Activated naive CD4-positive, alpha-beta T cell treated with anti-CD3 and anti-CD28 coated beads for 36 hours (primary cell): ENCODE measurements at regions of chr15 and their contacts with region 1.

Region 1: DNA sequence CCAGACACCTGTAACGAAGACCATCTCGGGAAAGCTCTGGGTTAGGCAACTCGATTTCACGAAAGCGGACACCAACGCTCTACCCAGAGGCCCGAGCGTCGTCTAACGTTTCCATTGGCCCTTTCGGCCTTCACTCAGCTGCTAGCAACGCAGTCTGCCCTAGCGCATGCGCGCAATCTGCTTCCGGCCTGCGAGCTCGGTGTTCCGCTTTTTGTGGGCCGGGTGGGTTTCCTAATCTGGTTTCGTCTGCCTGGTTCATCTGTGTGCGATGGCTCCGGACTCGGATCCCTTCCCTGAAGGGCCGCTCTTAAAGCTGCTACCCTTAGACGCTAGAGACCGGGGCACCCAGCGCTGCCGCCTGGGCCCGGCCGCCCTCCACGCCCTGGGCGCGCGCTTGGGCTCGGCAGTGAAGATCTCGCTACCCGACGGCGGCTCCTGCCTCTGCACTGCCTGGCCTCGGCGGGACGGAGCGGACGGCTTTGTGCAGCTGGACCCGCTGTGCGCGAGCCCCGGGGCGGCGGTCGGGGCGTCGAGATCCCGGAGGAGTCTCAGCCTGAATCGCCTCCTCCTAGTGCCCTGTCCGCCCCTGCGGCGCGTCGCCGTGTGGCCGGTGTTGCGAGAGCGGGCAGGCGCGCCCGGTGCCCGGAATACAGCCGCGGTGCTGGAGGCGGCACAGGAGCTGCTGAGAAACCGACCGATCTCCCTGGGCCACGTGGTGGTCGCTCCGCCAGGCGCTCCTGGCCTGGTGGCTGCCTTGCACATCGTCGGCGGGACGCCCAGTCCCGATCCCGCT is 24.0 kb upstream of the GATM start:
- DNase-seq: peak; percentile 98
- H3K4me3 Mint-ChIP-seq: peak overlapping the region; percentile 99
- H3K27ac Mint-ChIP-seq: peak overlapping the region; percentile 89
- H3K4me1 Mint-ChIP-seq: peaks cover 27% of the 10 kb centered on the region
- H3K27me3 Mint-ChIP-seq: no peaks in the 10 kb centered on the region

Region 2: GRCh38 chr15:45166834-45167630 is 235.3 kb before region 1 on chr15:
- CTCF ChIA-PET with region 1: interaction called, 41 read pairs
- intact Hi-C with region 1: loop called (anchors 1 kb)
- DNase-seq: peak; percentile 89
- H3K4me3 Mint-ChIP-seq: peak overlapping the region; percentile 69
- H3K27ac Mint-ChIP-seq: peak overlapping the region; percentile 66
- H3K4me1 Mint-ChIP-seq: peaks cover 10% of the 10 kb centered on the region
- H3K27me3 Mint-ChIP-seq: no peaks in the 10 kb centered on the region

Region 3: GRCh38 chr15:45279024-45279698 is 123.2 kb before region 1 on chr15:
- CTCF ChIA-PET with region 1: interaction called, 3 read pairs
- intact Hi-C with region 1: loop called (anchors 1 kb)
- DNase-seq: peak; percentile 96
- H3K4me3 Mint-ChIP-seq: peak overlapping the region; percentile 81
- H3K27ac Mint-ChIP-seq: peak overlapping the region; percentile 52
- H3K4me1 Mint-ChIP-seq: peaks cover 17% of the 10 kb centered on the region
- H3K27me3 Mint-ChIP-seq: no peaks in the 10 kb centered on the region

Region 4: DNA sequence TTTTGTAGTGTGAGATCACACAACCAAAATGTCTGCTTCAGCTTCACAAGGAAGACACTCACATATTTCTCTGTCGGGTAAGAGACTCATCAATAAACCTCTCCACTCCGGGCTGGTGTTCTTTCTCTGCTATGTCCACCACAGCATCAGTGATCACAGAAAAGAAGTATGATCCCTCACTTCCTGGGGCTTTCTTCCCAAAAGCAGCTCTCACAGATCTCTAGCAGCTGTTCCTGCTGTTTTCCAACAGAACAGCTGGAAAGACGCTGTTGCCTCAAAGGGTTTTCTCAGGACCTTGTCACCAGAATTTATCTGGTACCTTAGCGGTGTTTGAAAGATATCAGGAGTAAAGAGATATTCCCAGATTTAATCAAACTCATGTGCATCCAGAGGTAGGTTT is 70.4 kb before region 1 on chr15:
- CTCF ChIA-PET with region 1: no interaction called
- intact Hi-C with region 1: no loop called
- DNase-seq: no peak
- H3K4me3 Mint-ChIP-seq: no peak overlapping the region
- H3K27ac Mint-ChIP-seq: no peak overlapping the region
- H3K4me1 Mint-ChIP-seq: no peaks in the 10 kb centered on the region
- H3K27me3 Mint-ChIP-seq: no peaks in the 10 kb centered on the region

Region 5: DNA sequence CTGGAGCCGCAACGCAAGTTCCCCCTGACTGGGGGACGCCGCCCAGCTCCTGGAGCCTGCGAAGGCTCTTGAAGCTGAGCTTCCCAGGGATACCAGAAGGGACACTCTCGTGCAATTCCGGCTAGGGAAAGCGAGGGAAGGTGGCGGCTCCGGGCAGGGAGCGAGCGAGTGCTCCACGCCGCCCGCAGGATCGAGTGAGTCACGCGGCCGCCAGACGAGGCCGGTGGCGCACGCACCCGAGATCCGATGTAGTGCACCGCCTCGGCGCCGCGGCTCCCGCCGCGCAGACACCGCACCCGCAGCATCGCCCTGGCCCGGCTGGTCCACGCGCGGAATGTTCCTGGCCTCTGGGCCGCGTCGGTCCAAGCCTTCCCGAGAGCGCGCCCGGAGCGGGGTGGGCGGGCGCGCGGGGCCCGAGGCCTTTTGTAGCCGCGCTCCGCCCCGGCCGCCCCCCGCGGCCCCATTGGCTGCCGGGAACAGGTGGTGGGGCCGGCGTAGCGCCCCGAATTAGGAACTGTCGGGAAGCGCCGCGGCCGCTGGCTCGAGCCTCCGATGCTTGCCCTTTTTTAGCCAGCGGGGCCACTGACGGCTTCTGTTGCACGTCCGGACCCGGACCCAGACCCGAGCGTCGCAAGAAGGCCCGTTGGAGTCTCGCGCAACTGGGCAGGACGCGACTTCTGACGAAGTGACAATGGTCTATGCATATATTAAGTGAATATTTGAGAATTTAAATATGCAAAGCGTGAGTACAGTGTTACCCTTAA is 24.0 kb before region 1 on chr15 and contains the start of gene GATM:
- CTCF ChIA-PET with region 1: interaction called, 5 read pairs
- intact Hi-C with region 1: loop called (anchors 2 kb)
- DNase-seq: peak; percentile 59
- H3K4me3 Mint-ChIP-seq: peak within 1 kb of the TSS; percentile 74
- H3K27ac Mint-ChIP-seq: no peak within 1 kb of the TSS
- H3K4me1 Mint-ChIP-seq: peaks cover 9% of the 10 kb centered on the region
- H3K27me3 Mint-ChIP-seq: peaks cover 39% of the 10 kb centered on the region
- total RNA-seq, gene GATM: 0.91 to 1.2 TPM

Region 6: DNA sequence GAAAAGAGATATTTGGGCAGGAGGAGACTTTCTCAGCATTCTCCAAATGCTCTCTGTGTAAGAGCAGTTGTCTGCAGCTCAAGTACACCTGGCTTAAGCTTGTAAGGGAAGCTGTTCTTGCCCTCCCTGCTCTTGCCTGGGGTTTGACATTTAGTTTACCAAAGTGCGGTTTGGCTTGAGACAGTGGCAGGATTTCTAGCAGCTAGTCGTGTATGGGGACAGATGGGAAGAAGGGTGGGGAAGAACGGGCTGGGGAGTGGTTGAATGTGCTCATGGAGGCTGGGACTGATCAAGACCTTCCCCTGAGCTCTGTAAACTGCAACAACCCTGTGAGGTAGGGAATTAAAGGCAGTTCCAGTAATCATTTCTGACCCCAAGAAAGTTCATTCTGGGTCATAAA is 272.3 kb after region 1 on chr15:
- CTCF ChIA-PET with region 1: no interaction called
- intact Hi-C with region 1: no loop called
- DNase-seq: no peak
- H3K4me3 Mint-ChIP-seq: no peak overlapping the region
- H3K27ac Mint-ChIP-seq: no peak overlapping the region
- H3K4me1 Mint-ChIP-seq: no peaks in the 10 kb centered on the region
- H3K27me3 Mint-ChIP-seq: no peaks in the 10 kb centered on the region